Activated CD8-positive, alpha-beta T cell treated with anti-CD3 and anti-CD28 coated beads for 36 hours (primary cell): ENCODE measurements at regions of chr15 and their contacts with region 1.

Region 1: DNA sequence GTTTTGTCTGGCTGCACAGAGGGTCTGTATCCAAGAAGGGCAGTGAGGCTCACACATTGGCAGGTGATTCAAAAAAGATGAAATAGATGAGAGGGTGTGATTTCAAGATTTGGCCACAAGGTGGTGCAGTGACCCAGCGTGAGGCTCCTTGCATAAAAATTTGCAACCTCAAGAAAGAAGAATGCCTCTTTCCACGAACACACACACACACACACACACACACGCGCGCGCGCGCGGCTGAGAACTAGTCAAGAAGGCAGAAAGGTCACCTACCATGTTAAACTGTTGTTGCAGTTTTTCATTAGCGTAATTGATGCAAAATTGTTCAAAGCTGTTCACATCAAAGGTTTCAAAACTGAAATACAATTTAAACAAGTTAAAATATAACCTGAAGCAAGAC is 39.2 kb downstream of the MYO5C start:
- DNase-seq: peak; percentile 89
- ATAC-seq: peak; percentile 78
- H3K4me3 Mint-ChIP-seq: peak overlapping the region; percentile 38
- H3K27ac Mint-ChIP-seq: peak overlapping the region; percentile 55
- H3K4me1 Mint-ChIP-seq: peaks cover 24% of the 10 kb centered on the region
- H3K27me3 Mint-ChIP-seq: no peaks in the 10 kb centered on the region
- CTCF ChIP-seq: peak; percentile 74

Region 2: GRCh38 chr15:52171386-52171785 is 85.0 kb before region 1 on chr15:
- CTCF ChIA-PET with region 1: no interaction called
- POLR2A ChIA-PET with region 1: no interaction called
- intact Hi-C with region 1: no loop called
- DNase-seq: peak; percentile 27
- ATAC-seq: peak; percentile 74
- H3K4me3 Mint-ChIP-seq: peak overlapping the region; percentile 45
- H3K27ac Mint-ChIP-seq: peak overlapping the region; percentile 75
- H3K4me1 Mint-ChIP-seq: peaks cover 31% of the 10 kb centered on the region
- H3K27me3 Mint-ChIP-seq: no peaks in the 10 kb centered on the region
- CTCF ChIP-seq: no peak

Region 3: DNA sequence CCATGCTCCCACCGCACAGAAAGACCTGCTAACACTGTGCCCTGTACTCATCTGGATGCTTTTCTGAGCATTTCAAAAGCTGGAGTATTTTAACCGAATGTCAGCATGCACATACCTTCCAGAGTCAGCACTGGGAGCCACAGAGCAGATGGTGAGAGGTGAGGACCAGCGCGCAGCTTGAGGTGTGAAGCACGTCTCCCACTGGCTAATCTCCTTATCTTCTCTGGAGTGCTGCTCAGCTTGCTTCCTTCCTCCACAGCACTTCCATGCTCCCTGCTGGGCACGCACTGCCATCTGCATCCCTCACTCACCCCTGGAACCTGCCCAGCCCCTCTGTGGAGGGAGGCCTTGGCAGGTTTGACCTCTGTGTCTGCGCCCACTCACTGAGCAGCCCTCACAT is 65.2 kb before region 1 on chr15 and contains the start of gene GNB5:
- CTCF ChIA-PET with region 1: no interaction called
- POLR2A ChIA-PET with region 1: no interaction called
- intact Hi-C with region 1: no loop called
- DNase-seq: no peak
- ATAC-seq: no peak
- H3K4me3 Mint-ChIP-seq: no peak within 1 kb of the TSS
- H3K27ac Mint-ChIP-seq: no peak within 1 kb of the TSS
- H3K4me1 Mint-ChIP-seq: no peaks in the 10 kb centered on the region
- H3K27me3 Mint-ChIP-seq: no peaks in the 10 kb centered on the region
- CTCF ChIP-seq: no peak
- total RNA-seq, gene GNB5: 16.8 to 17.5 TPM

Region 4: DNA sequence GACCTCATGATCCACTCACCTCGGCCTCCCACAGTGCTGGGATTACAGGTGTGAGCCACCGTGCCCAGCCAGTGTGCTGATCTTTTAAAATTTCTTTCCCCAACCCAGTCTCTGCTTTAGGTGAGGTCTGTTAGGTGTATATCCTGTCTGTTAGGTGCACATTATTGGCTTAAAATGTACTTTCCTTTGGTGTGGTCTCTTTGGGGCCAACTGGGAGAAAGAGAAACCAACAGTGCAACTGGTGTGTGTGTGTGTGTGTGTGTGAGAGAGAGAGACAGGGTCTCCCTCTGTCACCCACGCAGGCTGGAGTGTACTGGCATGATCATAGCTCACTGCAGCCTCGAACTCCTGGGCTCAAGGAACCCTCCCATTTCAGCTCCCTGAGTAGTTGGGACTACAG is 14.9 kb before region 1 on chr15:
- CTCF ChIA-PET with region 1: interaction called, 23 read pairs
- POLR2A ChIA-PET with region 1: no interaction called
- intact Hi-C with region 1: no loop called
- DNase-seq: peak; percentile 31
- ATAC-seq: peak; percentile 79
- H3K4me3 Mint-ChIP-seq: no peak overlapping the region
- H3K27ac Mint-ChIP-seq: peak overlapping the region; percentile 31
- H3K4me1 Mint-ChIP-seq: peaks cover 7% of the 10 kb centered on the region
- H3K27me3 Mint-ChIP-seq: no peaks in the 10 kb centered on the region
- CTCF ChIP-seq: no peak

Region 5: DNA sequence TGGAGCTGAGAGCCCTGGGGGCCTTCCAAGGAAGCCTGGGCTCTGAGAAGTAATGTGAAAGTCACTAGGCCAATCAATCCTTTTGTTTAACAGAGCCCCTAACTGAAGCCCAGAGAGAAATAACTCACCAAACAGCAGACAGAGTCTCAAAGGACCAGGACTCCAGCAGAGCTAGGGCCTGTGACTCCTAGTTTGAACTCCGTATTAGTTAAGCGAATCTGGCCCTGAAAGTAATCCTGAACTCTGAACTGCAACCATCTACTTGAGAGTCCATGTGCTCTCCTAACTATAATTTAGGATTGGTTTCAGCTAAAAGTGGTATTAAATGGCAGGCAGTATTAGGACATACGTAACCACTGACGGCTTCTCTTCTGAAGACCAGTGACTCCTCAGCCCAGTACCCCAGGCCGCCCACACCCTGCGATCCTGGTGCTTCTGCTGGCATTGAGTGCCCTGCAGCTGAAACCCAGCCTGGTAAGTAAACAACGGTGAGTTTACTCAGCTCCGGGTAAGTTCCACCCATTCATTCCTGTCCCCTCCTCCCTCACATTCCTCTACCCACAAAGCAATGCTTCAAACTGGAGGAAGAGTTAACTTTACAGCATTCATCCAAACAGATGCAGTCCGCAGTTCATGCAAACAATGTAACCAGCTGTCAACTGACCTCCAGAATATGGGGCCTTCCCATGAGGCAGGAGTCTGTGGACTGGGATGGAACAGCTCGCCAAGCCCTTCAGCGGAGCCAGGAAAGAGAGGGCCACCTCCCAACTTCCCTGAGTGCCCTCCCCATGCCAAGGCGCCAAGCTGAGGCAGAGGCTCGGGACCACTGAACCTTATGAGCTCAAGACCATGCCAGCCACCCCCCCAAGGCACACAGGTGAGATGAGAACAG is 31.9 kb after region 1 on chr15:
- CTCF ChIA-PET with region 1: interaction called, 12 read pairs
- POLR2A ChIA-PET with region 1: no interaction called
- intact Hi-C with region 1: no loop called
- DNase-seq: no peak
- ATAC-seq: no peak
- H3K4me3 Mint-ChIP-seq: no peak overlapping the region
- H3K27ac Mint-ChIP-seq: no peak overlapping the region
- H3K4me1 Mint-ChIP-seq: peaks cover 3% of the 10 kb centered on the region
- H3K27me3 Mint-ChIP-seq: peaks cover 2% of the 10 kb centered on the region
- CTCF ChIP-seq: no peak

Region 6: GRCh38 chr15:52559575-52559974 is 303.2 kb after region 1 on chr15:
- CTCF ChIA-PET with region 1: interaction called, 11 read pairs
- POLR2A ChIA-PET with region 1: no interaction called
- intact Hi-C with region 1: no loop called
- DNase-seq: peak; percentile 67
- ATAC-seq: peak; percentile 77
- H3K4me3 Mint-ChIP-seq: no peak overlapping the region
- H3K27ac Mint-ChIP-seq: peak overlapping the region; percentile 53
- H3K4me1 Mint-ChIP-seq: peaks cover 73% of the 10 kb centered on the region
- H3K27me3 Mint-ChIP-seq: no peaks in the 10 kb centered on the region
- CTCF ChIP-seq: no peak

Region 7: DNA sequence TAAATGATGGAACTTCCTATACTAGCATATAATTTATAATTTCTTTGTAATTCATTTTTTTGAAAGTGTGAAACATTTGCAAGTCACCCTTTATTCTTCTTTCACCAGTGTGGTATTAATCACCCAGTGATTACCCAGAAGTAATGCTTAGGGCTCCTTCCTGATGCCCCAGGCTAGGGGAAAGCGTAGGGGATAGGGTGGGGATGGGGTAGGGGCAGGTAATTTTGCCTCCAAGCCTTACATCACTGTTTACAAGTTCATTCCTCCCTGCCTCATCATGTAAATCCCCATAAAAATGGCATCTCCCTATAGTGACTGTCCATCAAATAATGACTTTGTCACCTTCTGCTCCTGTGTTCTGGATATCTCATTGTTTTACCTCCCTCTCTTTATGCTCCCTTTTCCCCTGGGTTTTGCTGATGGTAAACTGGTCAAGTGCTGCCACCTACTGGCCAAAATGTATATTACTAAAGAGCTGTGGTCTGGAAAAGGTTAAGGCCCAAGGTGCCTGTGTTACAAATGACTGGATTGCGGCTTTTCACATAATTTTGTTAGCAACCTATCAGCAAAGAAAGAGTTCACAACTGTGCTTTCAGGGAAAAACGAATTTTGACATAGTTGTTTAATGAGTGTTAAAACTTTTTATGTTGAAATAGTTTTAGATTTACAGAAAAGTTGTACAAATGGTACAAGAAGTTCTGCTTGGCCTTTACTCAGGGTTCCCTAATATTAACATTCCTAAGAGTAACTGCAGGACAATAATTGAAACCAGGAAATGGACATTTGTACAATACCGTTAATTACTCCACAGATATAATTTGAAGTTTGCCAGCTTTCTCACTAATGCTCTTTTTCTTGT is 479.1 kb after region 1 on chr15:
- CTCF ChIA-PET with region 1: interaction called, 49 read pairs
- POLR2A ChIA-PET with region 1: no interaction called
- intact Hi-C with region 1: loop called (anchors 2 kb)
- DNase-seq: peak; percentile 81
- ATAC-seq: peak; percentile 92
- H3K4me3 Mint-ChIP-seq: no peak overlapping the region
- H3K27ac Mint-ChIP-seq: no peak overlapping the region
- H3K4me1 Mint-ChIP-seq: peaks cover under 1% of the 10 kb centered on the region
- H3K27me3 Mint-ChIP-seq: no peaks in the 10 kb centered on the region
- CTCF ChIP-seq: peak; percentile 90